Common myeloid progenitor, CD34-positive (primary cell): ENCODE measurements at regions of chr7 and their contacts with region 1.

Region 1: DNA sequence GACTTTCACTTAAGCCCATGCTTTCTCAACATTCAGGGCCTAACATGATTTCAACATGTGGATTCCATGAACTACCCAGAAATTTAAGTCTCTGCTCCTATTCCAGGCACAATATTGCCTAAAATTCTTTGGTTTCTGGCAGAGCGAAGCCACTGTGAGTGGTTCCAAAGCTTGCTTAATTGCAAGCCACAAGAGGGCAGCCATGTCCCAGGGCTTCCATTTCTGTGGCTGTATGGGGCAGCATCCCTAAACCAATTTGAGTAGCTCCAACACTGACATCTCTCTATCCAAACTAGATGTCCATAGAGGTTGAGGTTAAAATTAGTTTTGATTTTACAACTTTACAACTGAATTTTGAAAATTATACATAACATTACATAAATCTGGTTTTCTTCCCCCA is 56.3 kb upstream of the MDFIC start:
- DNase-seq: peak; percentile 47 to 69 (median 60)
- H3K4me3 ChIP-seq: no peak overlapping the region
- H3K27ac ChIP-seq: no peak overlapping the region
- H3K4me1 ChIP-seq: no peaks in the 10 kb centered on the region
- H3K27me3 ChIP-seq: no peaks in the 10 kb centered on the region

Region 2: GRCh38 chr7:114930829-114931655 is 65.5 kb after region 1 on chr7:
- CTCF ChIA-PET with region 1: no interaction called
- POLR2A ChIA-PET with region 1: no interaction called
- DNase-seq: peak in 2 of 3 donors; percentile 73 to 86
- H3K4me3 ChIP-seq: peak overlapping the region in 3 of 7 experiments; percentile 7 to 45 (median 7)
- H3K27ac ChIP-seq: peak overlapping the region in 1 of 2 experiments; percentile 57
- H3K4me1 ChIP-seq: peaks cover 10 to 50% (median 35%) of the 10 kb centered on the region in 4 experiments
- H3K27me3 ChIP-seq: no peaks in the 10 kb centered on the region

Region 3: DNA sequence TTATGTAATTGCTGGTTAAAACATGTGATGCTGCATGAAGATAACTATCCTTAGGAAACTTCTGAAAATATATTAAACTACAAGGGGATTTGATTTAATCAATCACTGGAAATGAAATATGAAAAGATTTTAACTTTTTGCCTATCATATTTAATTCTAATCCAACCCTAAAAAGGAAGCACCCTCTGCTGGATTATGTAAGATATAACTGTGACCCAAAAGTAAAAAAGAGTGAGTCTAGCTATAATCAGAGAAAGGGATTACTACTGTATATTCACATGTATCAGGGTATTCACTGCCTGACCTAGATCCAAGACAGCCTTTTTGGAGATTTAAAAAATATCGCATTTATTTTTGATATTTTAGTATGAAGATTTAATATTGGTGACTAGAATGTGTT is 351.8 kb after region 1 on chr7:
- CTCF ChIA-PET with region 1: interaction called, 69 read pairs
- POLR2A ChIA-PET with region 1: no interaction called
- DNase-seq: peak; percentile 6 to 44 (median 26)
- H3K4me3 ChIP-seq: no peak overlapping the region
- H3K27ac ChIP-seq: no peak overlapping the region
- H3K4me1 ChIP-seq: no peaks in the 10 kb centered on the region
- H3K27me3 ChIP-seq: no peaks in the 10 kb centered on the region